Naive thymus-derived CD8-positive, alpha-beta T cell (primary cell): ENCODE measurements at regions of chr19 and their contacts with region 1.

Region 1: DNA sequence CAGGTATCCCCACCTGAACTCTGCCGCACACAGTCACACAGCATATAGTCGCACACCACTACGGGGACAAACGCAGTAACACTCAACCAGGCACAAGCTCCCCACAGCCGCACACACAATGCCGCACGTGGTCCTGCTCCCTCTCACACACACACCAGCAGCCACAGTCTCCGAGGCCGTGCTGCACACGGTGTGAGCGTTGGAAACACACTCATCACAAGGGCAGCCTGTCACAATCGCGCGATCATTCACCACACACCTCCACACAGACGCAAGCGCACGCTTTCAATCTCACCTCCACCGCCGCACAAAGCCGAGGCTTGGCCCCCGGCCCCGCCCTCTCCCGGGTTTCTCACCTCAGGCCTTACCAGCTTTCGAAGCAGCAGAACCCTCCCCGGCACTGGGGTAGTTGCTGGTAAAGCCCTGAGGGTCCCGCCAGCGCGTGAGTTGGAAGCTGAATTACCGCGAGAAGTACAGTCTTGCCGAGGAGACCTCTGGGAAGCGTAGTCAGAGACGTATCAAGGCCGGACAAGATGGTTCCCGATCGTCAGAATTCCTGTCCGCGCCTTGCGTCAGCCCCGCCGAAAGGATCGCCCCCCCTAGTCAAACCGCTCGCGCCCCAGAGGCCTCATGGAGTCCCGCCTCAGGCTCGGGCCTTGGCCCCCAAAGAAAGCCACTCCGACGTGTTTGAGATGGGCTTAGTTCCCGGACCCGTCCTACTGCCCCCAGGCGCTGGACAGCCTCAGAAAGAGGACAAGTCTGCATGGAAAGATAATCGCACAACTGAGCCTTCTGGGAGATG is at the start of gene ZNF566:
- DNase-seq: peak; percentile 82 to 98 (median 94)
- ATAC-seq: peak; percentile 91 to 92
- H3K4me3 Mint-ChIP-seq: peak within 1 kb of the TSS; percentile 92 to 100 (median 98)
- H3K27ac Mint-ChIP-seq: peak within 1 kb of the TSS; percentile 97 to 99 (median 99)
- H3K4me1 Mint-ChIP-seq: peaks cover 23 to 36% (median 33%) of the 10 kb centered on the region in 4 donors
- H3K27me3 Mint-ChIP-seq: no peaks in the 10 kb centered on the region
- polyA plus RNA-seq, gene ZNF566: 9.0 to 23.8 (median 13.2) TPM

Region 2: GRCh38 chr19:36214386-36215275 is 274.7 kb before region 1 on chr19 and contains the starts of genes ZNF146 and ZNF565:
- POLR2A ChIA-PET with region 1: interaction called, 15 read pairs
- DNase-seq: peak; percentile 89 to 98 (median 96)
- ATAC-seq: peak; percentile 86 to 89
- H3K4me3 Mint-ChIP-seq: no peak within 1 kb of the TSS
- H3K27ac Mint-ChIP-seq: peak within 1 kb of the TSS in 3 of 10 donors; percentile 49 to 78 (median 77)
- H3K4me1 Mint-ChIP-seq: peaks cover 12 to 33% (median 26%) of the 10 kb centered on the region in 4 donors
- H3K27me3 Mint-ChIP-seq: no peaks in the 10 kb centered on the region
- polyA plus RNA-seq, gene ZNF146: 51.4 to 88.6 (median 67.9) TPM
- polyA plus RNA-seq, gene ZNF565: 1.7 to 4.8 (median 2.5) TPM

Region 3: DNA sequence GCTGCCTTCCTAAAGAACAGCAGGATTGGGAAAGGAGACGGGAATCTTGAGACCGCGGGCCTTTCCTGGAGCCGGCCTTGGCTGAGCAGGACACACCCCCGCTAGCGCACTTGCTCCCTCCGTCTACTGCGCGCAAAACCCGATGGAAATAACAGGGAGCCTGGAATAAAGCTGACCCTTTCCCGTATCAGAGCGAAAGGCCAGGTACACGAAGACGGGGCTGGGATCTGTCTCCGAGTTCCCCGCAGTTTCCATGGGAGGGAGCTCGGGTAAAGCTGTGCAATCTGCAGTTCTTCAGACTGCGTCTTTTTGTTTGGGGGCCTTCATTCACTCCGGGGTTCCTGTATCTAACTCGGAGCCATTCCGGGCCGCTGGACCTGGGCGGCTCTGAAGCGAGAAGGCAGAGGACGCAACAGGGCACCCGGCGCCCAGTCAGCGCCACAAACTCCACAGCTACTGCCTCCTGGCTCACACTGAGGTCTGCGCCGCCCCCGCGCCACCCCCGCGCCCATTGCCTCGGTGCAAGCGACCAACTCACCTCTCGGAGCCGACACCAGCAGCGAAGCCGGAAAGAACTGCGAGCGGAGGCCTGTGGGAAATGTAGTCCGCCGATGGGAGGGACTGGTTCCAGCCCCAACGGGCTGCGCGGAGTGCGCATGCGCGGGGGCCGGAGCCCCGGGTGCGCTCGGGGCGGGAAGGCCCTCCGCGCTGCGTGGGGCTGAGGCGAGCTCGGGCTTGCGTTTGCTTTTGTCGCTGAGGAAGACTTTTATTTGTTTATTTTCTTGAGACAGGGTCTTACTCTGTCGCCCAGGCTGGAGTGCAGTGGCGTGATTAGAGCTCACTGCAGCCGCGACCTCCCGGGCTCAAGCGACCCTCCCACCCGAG is 110.5 kb before region 1 on chr19 and contains the start of gene ZFP14:
- POLR2A ChIA-PET with region 1: interaction called, 12 read pairs
- DNase-seq: peak; percentile 91 to 97 (median 94)
- ATAC-seq: peak; percentile 96 to 98
- H3K4me3 Mint-ChIP-seq: peak within 1 kb of the TSS; percentile 89 to 98 (median 96)
- H3K27ac Mint-ChIP-seq: peak within 1 kb of the TSS; percentile 76 to 99 (median 97)
- H3K4me1 Mint-ChIP-seq: peaks cover 11 to 27% (median 22%) of the 10 kb centered on the region in 4 donors
- H3K27me3 Mint-ChIP-seq: no peaks in the 10 kb centered on the region
- polyA plus RNA-seq, gene ZFP14: 3.4 to 5.5 (median 4.6) TPM

Region 4: DNA sequence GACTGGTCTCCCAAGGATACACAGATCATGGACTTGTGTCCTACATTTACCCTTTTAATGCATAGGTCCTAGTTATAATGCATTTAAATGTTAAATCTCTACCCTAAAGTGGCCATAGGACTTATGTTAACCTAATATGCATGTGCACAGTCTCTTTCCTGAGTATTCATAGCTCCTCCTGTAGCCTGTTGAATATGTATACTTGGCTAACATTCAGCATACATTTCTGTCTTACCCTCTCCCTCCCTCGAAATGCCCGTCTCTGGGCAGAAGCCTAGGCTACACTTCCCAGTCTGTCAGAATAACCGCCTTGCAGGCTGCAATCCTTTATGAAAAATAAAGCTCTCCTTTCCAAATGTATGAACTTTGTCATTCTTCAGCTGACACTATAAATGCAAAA is 84.8 kb before region 1 on chr19:
- POLR2A ChIA-PET with region 1: no interaction called
- DNase-seq: no peak
- ATAC-seq: no peak
- H3K4me3 Mint-ChIP-seq: no peak overlapping the region
- H3K27ac Mint-ChIP-seq: no peak overlapping the region
- H3K4me1 Mint-ChIP-seq: peaks cover 0 to 10% (median 2%) of the 10 kb centered on the region in 4 donors
- H3K27me3 Mint-ChIP-seq: no peaks in the 10 kb centered on the region

Region 5: GRCh38 chr19:36418287-36419001 is 70.9 kb before region 1 on chr19 and contains the start of gene ZFP82:
- POLR2A ChIA-PET with region 1: interaction called, 10 read pairs
- DNase-seq: peak; percentile 51 to 83 (median 72)
- ATAC-seq: peak; percentile 92
- H3K4me3 Mint-ChIP-seq: peak within 1 kb of the TSS; percentile 84 to 99 (median 93)
- H3K27ac Mint-ChIP-seq: peak within 1 kb of the TSS; percentile 87 to 99 (median 94)
- H3K4me1 Mint-ChIP-seq: peaks cover 9 to 25% (median 22%) of the 10 kb centered on the region in 4 donors
- H3K27me3 Mint-ChIP-seq: peaks cover 10 to 31% (median 17%) of the 10 kb centered on the region in 5 donors
- polyA plus RNA-seq, gene ZFP82: 2.8 to 13.5 (median 5.3) TPM

Region 6: GRCh38 chr19:36514012-36514612 is 24.8 kb after region 1 on chr19:
- POLR2A ChIA-PET with region 1: no interaction called
- DNase-seq: no peak
- ATAC-seq: no peak
- H3K4me3 Mint-ChIP-seq: no peak overlapping the region
- H3K27ac Mint-ChIP-seq: no peak overlapping the region
- H3K4me1 Mint-ChIP-seq: no peaks in the 10 kb centered on the region
- H3K27me3 Mint-ChIP-seq: no peaks in the 10 kb centered on the region

Region 7: GRCh38 chr19:36528194-36528920 is 39.0 kb after region 1 on chr19 and contains the start of gene ZNF260:
- POLR2A ChIA-PET with region 1: interaction called, 32 read pairs
- DNase-seq: peak; percentile 84 to 95 (median 90)
- ATAC-seq: peak; percentile 89
- H3K4me3 Mint-ChIP-seq: peak within 1 kb of the TSS; percentile 94 to 100 (median 98)
- H3K27ac Mint-ChIP-seq: peak within 1 kb of the TSS; percentile 93 to 99 (median 98)
- H3K4me1 Mint-ChIP-seq: peaks cover 19 to 32% (median 24%) of the 10 kb centered on the region in 4 donors
- H3K27me3 Mint-ChIP-seq: no peaks in the 10 kb centered on the region
- polyA plus RNA-seq, gene ZNF260: 5.5 to 9.8 (median 8.2) TPM

Region 8: GRCh38 chr19:36573020-36573885 is 83.9 kb after region 1 on chr19 and contains the start of gene ZNF529:
- POLR2A ChIA-PET with region 1: interaction called, 19 read pairs
- DNase-seq: peak; percentile 65 to 93 (median 88)
- ATAC-seq: peak; percentile 84 to 93
- H3K4me3 Mint-ChIP-seq: peak within 1 kb of the TSS; percentile 83 to 100 (median 94)
- H3K27ac Mint-ChIP-seq: peak within 1 kb of the TSS; percentile 96 to 100 (median 97)
- H3K4me1 Mint-ChIP-seq: peaks cover 25 to 48% (median 41%) of the 10 kb centered on the region in 4 donors
- H3K27me3 Mint-ChIP-seq: no peaks in the 10 kb centered on the region
- polyA plus RNA-seq, gene ZNF529: 8.0 to 10.6 (median 9.9) TPM

Region 9: GRCh38 chr19:36605101-36605876 is 116.0 kb after region 1 on chr19 and contains the start of gene ZNF382:
- POLR2A ChIA-PET with region 1: interaction called, 13 read pairs
- DNase-seq: peak; percentile 71 to 93 (median 83)
- ATAC-seq: peak; percentile 78 to 84
- H3K4me3 Mint-ChIP-seq: peak within 1 kb of the TSS; percentile 88 to 99 (median 96)
- H3K27ac Mint-ChIP-seq: peak within 1 kb of the TSS; percentile 86 to 98 (median 96)
- H3K4me1 Mint-ChIP-seq: peaks cover 16 to 31% (median 30%) of the 10 kb centered on the region in 4 donors
- H3K27me3 Mint-ChIP-seq: no peaks in the 10 kb centered on the region
- polyA plus RNA-seq, gene ZNF382: 3.3 to 7.9 (median 7.1) TPM